PC-3 (cell line): ENCODE measurements at regions of chr17 and their contacts with region 1.

Region 1: DNA sequence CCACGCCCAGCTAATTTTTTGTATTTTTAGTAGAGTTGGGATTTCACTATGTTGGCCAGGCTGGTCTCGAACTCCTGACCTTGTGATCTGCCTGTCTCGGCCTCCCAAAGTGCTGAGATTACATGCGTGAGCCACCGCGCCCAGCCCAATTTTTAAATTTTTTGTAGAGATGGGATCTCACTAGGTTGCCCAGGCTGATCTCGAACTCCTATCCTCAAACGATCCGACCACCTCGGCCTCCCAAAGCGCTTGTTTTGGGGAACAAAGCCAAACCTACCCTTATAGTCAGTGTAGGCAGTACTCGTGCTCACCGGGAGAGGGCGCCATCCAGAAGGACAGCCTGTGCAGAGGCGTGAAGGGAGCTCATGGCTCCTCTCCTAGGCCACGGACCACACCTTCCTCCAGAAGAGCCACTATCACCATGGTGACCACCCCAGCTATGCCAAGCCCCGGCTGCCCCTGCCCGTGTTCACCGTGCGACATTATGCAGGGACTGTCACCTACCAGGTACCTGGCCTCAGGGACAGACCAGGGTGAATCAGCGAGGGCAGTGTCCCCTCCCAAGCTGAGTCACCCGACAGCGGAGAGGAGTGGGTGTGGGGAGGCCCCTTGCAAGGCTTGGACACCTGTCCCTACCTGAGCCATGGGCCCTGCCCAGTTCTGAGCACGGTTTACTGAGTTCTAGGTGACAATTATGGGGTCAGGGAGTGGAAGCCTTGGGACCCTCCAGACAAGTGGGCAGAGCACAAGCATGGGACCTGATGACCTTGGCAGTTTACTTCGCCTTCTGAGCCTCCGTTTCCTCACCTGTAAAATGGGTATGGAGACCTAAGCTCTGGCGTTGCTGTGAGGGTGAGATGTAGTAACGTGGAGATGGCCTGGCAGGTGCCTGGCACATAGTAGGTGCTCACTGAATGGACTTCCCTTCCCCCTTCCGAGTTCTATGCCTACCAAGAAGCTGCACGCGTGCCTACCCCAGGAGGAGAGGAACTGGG is 13.8 kb downstream of the MYO15B start:
- DNase-seq: peak; percentile 77
- ATAC-seq: peak; percentile 54
- H3K4me3 ChIP-seq: no peak overlapping the region
- H3K27ac ChIP-seq: no peak overlapping the region
- H3K4me1 ChIP-seq: peaks cover 27% of the 10 kb centered on the region
- H3K27me3 ChIP-seq: no peaks in the 10 kb centered on the region
- CTCF ChIP-seq: peak; percentile 95

Region 2: GRCh38 chr17:75616516-75617122 is 15.3 kb after region 1 on chr17:
- CTCF ChIA-PET with region 1: interaction called, 12 read pairs
- POLR2A ChIA-PET with region 1: no interaction called
- intact Hi-C with region 1: no loop called
- DNase-seq: no peak
- ATAC-seq: no peak
- H3K4me3 ChIP-seq: no peak overlapping the region
- H3K27ac ChIP-seq: no peak overlapping the region
- H3K4me1 ChIP-seq: no peaks in the 10 kb centered on the region
- H3K27me3 ChIP-seq: no peaks in the 10 kb centered on the region
- CTCF ChIP-seq: no peak

Region 3: GRCh38 chr17:75652915-75653549 is 51.7 kb after region 1 on chr17:
- CTCF ChIA-PET with region 1: interaction called, 10 read pairs
- POLR2A ChIA-PET with region 1: no interaction called
- intact Hi-C with region 1: no loop called
- DNase-seq: peak; percentile 55
- ATAC-seq: peak; percentile 73
- H3K4me3 ChIP-seq: no peak overlapping the region
- H3K27ac ChIP-seq: no peak overlapping the region
- H3K4me1 ChIP-seq: no peaks in the 10 kb centered on the region
- H3K27me3 ChIP-seq: no peaks in the 10 kb centered on the region
- CTCF ChIP-seq: peak; percentile 92

Region 4: DNA sequence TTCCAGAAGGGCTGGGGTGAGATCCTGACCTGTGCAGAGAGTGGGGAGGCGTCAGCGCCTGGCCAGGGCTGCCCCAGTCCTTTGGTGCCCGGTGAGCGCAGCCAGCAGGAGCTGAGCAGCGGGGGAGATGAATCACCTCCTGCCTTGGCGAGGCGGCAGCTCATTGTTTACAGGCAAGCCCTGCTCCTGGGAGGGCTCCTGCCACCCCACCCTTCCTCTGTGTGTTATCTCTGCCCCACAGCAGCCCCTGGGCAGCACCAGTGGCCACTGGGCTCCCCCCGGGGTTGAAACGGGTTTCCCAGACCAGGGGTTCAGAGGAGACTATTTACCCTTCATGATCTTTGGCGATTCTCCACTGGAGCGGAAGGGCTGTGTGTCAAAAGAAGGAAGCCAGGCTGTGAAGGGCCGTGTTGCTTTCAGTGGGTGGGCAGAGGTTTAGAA is 105.8 kb after region 1 on chr17:
- CTCF ChIA-PET with region 1: no interaction called
- POLR2A ChIA-PET with region 1: no interaction called
- intact Hi-C with region 1: no loop called
- DNase-seq: peak; percentile 94
- ATAC-seq: peak; percentile 99
- H3K4me3 ChIP-seq: peak overlapping the region; percentile 16; the same call in 1 of the 2 replicates
- H3K27ac ChIP-seq: peak overlapping the region; percentile 68
- H3K4me1 ChIP-seq: peaks cover 34% of the 10 kb centered on the region
- H3K27me3 ChIP-seq: no peaks in the 10 kb centered on the region
- CTCF ChIP-seq: no peak

Region 5: GRCh38 chr17:76331083-76331482 is 729.7 kb after region 1 on chr17:
- CTCF ChIA-PET with region 1: no interaction called
- POLR2A ChIA-PET with region 1: interaction called, 14 read pairs
- intact Hi-C with region 1: no loop called
- DNase-seq: peak; percentile 71
- ATAC-seq: peak; percentile 33; the same call in 1 of the 2 replicates
- H3K4me3 ChIP-seq: no peak overlapping the region
- H3K27ac ChIP-seq: no peak overlapping the region
- H3K4me1 ChIP-seq: peaks cover 13% of the 10 kb centered on the region
- H3K27me3 ChIP-seq: no peaks in the 10 kb centered on the region
- CTCF ChIP-seq: no peak